Common myeloid progenitor, CD34-positive (primary cell): ENCODE measurements at regions of chr4 and their contacts with region 1.

Region 1: GRCh38 chr4:129641179-129641578 is 545.2 kb downstream of the C4orf33 start:
- DNase-seq: peak; percentile 36 to 70 (median 46)
- H3K4me3 ChIP-seq: no peak overlapping the region
- H3K27ac ChIP-seq: no peak overlapping the region
- H3K4me1 ChIP-seq: no peaks in the 10 kb centered on the region
- H3K27me3 ChIP-seq: no peaks in the 10 kb centered on the region

Region 2: GRCh38 chr4:129344058-129344457 is 297.1 kb before region 1 on chr4:
- CTCF ChIA-PET with region 1: interaction called, 11 read pairs
- POLR2A ChIA-PET with region 1: no interaction called
- DNase-seq: peak; percentile 4 to 49 (median 32)
- H3K4me3 ChIP-seq: no peak overlapping the region
- H3K27ac ChIP-seq: no peak overlapping the region
- H3K4me1 ChIP-seq: peaks cover 0 to 9% (median 0%) of the 10 kb centered on the region in 4 experiments
- H3K27me3 ChIP-seq: peaks cover 0 to 4% (median 0%) of the 10 kb centered on the region in 5 experiments

Region 3: DNA sequence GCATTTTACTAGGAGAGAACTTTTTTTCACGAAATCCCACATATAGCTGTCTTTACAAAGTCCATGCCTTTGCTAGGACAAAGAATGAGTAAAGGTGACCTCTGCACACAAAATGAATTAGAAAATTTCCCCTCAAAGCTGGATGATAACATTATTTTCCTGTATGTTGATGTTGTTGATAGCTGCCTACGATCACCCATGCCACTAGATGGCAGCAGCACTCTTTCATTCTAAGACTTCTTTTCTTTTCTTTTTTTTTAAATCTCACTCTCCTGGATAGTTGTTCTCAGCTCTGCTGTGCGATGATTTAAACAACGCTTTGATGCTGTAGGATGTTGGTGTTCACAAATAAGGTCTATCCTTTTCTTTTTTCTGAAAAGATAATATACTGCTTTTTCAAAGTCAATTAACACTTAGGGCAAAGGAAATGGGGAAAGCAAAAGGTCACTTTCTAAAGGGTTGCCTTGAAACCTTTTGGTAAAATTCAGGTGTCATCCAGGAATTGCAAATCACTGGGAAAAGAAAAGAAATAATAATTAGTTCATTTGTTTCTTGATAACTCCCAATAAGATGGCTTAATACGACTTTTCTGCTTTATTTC is 278.4 kb before region 1 on chr4:
- CTCF ChIA-PET with region 1: interaction called, 70 read pairs
- POLR2A ChIA-PET with region 1: interaction called, 3 read pairs
- DNase-seq: peak; percentile 65 to 86 (median 72)
- H3K4me3 ChIP-seq: no peak overlapping the region
- H3K27ac ChIP-seq: no peak overlapping the region
- H3K4me1 ChIP-seq: no peaks in the 10 kb centered on the region
- H3K27me3 ChIP-seq: peaks cover 0 to 4% (median 0%) of the 10 kb centered on the region in 5 experiments

Region 4: GRCh38 chr4:130210864-130211263 is 569.7 kb after region 1 on chr4:
- CTCF ChIA-PET with region 1: no interaction called
- POLR2A ChIA-PET with region 1: no interaction called
- DNase-seq: no peak
- H3K4me3 ChIP-seq: no peak overlapping the region
- H3K27ac ChIP-seq: no peak overlapping the region
- H3K4me1 ChIP-seq: no peaks in the 10 kb centered on the region
- H3K27me3 ChIP-seq: no peaks in the 10 kb centered on the region